ENCODE measurements at regions of chr3 and their contacts with region 1.

Region 1: DNA sequence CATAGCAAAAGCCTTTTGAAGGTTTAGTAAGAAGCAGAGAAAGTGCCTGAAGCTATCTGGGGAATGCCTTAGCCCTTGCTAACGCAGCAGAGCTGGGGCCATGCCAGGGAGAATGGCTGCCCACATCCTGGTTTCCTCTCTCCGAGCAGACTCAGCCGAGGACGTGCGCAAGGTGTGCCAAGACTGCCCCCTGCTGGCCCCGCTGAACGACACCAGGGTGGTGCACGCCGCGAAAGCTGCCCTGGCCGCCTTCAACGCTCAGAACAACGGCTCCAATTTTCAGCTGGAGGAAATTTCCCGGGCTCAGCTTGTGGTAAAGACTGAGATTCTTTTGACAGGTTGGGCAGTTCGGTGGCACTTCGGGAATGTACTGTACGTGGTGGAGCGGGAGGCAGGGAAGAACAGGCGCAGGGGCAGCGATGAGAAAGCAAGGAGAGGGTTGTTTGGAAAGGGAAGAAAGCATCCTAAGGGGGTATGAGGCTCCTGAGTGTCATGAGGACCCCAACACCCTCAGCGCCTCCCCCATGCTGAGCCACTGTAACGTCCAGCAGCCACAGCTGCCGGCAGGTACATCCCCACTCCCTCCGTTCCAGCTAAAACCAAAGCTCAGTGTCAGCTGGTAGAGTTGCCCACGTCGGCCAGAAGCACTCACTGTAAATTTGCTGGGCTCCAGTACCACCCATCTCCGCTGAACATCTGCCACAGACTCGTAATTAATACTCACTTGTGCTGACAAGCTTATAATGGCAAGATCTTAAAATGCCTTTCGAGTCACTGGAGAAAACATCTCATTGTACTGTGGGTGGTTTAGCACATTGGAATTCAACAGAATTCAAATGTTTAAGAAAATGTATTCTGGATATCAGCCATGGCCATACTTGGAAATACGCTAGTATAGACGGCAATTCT is 4.4 kb downstream of the AHSG start:
- DNase-seq: peak; percentile 93
- ATAC-seq: peak; percentile 99
- H3K4me3 Mint-ChIP-seq: peak overlapping the region; percentile 63
- H3K27ac Mint-ChIP-seq: peak overlapping the region; percentile 68
- H3K4me1 Mint-ChIP-seq: peaks cover 22% of the 10 kb centered on the region
- H3K27me3 Mint-ChIP-seq: peaks cover 32% of the 10 kb centered on the region
- CTCF ChIP-seq: peak; percentile 81

Region 2: GRCh38 chr3:185983495-185984141 is 633.7 kb before region 1 on chr3:
- CTCF ChIA-PET with region 1: interaction called, 14 read pairs
- POLR2A ChIA-PET with region 1: no interaction called
- intact Hi-C with region 1: no loop called
- DNase-seq: peak; percentile 66
- ATAC-seq: peak; percentile 77
- H3K4me3 Mint-ChIP-seq: no peak overlapping the region
- H3K27ac Mint-ChIP-seq: no peak overlapping the region
- H3K4me1 Mint-ChIP-seq: peaks cover 6% of the 10 kb centered on the region
- H3K27me3 Mint-ChIP-seq: peaks cover 6% of the 10 kb centered on the region
- CTCF ChIP-seq: peak; percentile 98

Region 3: DNA sequence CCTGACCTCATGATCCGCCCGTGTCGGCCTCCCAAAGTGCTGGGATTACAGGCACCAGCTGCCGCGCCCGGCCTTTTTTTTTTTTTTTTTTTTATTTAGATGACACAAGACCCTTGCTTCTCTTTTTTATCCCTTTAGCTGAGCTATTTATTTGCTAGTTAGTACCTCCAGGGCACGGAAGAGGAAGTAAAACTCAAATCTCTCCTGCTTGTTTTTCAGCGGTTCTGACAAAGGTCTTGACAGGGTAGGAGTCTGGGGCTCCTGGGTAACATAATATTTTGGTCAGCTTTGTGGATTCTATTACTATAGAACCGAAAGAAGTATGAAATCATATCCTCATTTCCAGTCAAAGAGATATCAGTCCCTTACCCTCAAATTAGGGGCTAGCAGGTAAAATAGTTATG is 464.4 kb before region 1 on chr3:
- CTCF ChIA-PET with region 1: no interaction called
- POLR2A ChIA-PET with region 1: no interaction called
- intact Hi-C with region 1: no loop called
- DNase-seq: no peak
- ATAC-seq: peak; percentile 53
- H3K4me3 Mint-ChIP-seq: no peak overlapping the region
- H3K27ac Mint-ChIP-seq: no peak overlapping the region
- H3K4me1 Mint-ChIP-seq: peaks cover 10% of the 10 kb centered on the region
- H3K27me3 Mint-ChIP-seq: peaks cover 33% of the 10 kb centered on the region
- CTCF ChIP-seq: no peak

Region 4: GRCh38 chr3:186298876-186299275 is 318.4 kb before region 1 on chr3:
- CTCF ChIA-PET with region 1: no interaction called
- POLR2A ChIA-PET with region 1: no interaction called
- intact Hi-C with region 1: no loop called
- DNase-seq: no peak
- ATAC-seq: no peak
- H3K4me3 Mint-ChIP-seq: no peak overlapping the region
- H3K27ac Mint-ChIP-seq: no peak overlapping the region
- H3K4me1 Mint-ChIP-seq: no peaks in the 10 kb centered on the region
- H3K27me3 Mint-ChIP-seq: peaks cover 2% of the 10 kb centered on the region
- CTCF ChIP-seq: no peak

Region 5: GRCh38 chr3:186540221-186540834 is 77.0 kb before region 1 on chr3:
- CTCF ChIA-PET with region 1: interaction called, 59 read pairs
- POLR2A ChIA-PET with region 1: no interaction called
- intact Hi-C with region 1: no loop called
- DNase-seq: peak; percentile 90
- ATAC-seq: peak; percentile 85
- H3K4me3 Mint-ChIP-seq: no peak overlapping the region
- H3K27ac Mint-ChIP-seq: no peak overlapping the region
- H3K4me1 Mint-ChIP-seq: peaks cover 58% of the 10 kb centered on the region
- H3K27me3 Mint-ChIP-seq: no peaks in the 10 kb centered on the region
- CTCF ChIP-seq: peak; percentile 79

Region 6: GRCh38 chr3:186589121-186589520 is 28.2 kb before region 1 on chr3:
- CTCF ChIA-PET with region 1: interaction called, 185 read pairs
- POLR2A ChIA-PET with region 1: interaction called, 3 read pairs
- intact Hi-C with region 1: no loop called
- DNase-seq: no peak
- ATAC-seq: no peak
- H3K4me3 Mint-ChIP-seq: no peak overlapping the region
- H3K27ac Mint-ChIP-seq: no peak overlapping the region
- H3K4me1 Mint-ChIP-seq: peaks cover 20% of the 10 kb centered on the region
- H3K27me3 Mint-ChIP-seq: no peaks in the 10 kb centered on the region
- CTCF ChIP-seq: peak; percentile 19

Region 7: DNA sequence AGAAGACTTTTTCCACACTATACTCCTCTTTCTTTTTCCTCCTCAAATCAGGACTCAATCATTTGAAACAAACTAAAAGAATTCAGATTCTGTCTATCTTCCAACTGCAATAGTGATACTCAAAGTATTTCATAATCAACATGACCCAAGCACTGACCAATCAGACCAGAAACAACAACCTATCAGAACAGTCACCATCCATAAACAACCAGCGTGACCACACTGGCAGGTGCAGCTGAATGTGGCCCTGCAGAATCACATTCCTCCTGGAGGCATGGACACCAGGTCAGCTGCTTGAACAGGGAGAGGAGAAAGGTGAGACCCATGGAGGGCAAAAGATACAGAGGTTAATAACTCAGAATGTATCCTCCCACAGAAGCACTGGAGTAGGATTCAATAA is 61.9 kb after region 1 on chr3:
- CTCF ChIA-PET with region 1: no interaction called
- POLR2A ChIA-PET with region 1: no interaction called
- intact Hi-C with region 1: no loop called
- DNase-seq: no peak
- ATAC-seq: no peak
- H3K4me3 Mint-ChIP-seq: no peak overlapping the region
- H3K27ac Mint-ChIP-seq: no peak overlapping the region
- H3K4me1 Mint-ChIP-seq: no peaks in the 10 kb centered on the region
- H3K27me3 Mint-ChIP-seq: peaks cover 33% of the 10 kb centered on the region
- CTCF ChIP-seq: no peak

Region 8: DNA sequence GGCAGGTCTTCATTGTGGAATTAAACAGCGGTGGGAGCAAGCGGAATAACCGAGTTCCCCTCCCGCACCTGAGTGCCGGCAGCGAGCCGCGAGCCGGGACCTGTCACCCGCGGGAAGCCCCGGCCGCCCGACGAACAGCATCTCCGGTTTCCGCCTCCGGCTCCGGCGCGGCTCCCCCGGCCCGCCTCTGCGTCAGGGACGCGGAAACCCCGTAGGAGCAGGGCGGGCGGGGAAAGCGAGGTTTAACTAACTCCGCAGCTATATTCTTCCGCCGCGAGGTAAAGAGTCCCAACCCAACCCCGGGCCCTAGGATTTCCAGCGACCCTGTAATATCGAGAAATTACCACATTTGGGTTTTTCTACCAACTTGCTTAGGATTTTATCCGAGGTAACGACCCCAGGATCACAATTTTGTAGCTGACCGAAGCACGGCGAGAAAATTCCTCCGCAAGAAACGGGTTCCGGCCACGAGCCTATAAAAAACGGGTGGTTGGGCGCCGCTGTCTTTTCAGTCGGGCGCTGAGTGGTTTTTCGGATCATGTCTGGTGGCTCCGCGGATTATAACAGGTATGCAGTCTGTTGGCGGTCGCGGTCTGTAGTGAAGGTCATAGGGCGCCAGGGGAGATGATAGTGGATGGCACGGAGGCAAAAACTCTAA is 165.9 kb after region 1 on chr3 and contains the start of gene EIF4A2:
- CTCF ChIA-PET with region 1: interaction called, 8 read pairs
- POLR2A ChIA-PET with region 1: interaction called, 65 read pairs
- intact Hi-C with region 1: no loop called
- DNase-seq: peak; percentile 91
- ATAC-seq: peak; percentile 78
- H3K4me3 Mint-ChIP-seq: peak within 1 kb of the TSS; percentile 97
- H3K27ac Mint-ChIP-seq: peak within 1 kb of the TSS; percentile 99
- H3K4me1 Mint-ChIP-seq: peaks cover 30% of the 10 kb centered on the region
- H3K27me3 Mint-ChIP-seq: no peaks in the 10 kb centered on the region
- CTCF ChIP-seq: no peak
- total RNA-seq, gene EIF4A2: 450 to 466 TPM

Region 9: DNA sequence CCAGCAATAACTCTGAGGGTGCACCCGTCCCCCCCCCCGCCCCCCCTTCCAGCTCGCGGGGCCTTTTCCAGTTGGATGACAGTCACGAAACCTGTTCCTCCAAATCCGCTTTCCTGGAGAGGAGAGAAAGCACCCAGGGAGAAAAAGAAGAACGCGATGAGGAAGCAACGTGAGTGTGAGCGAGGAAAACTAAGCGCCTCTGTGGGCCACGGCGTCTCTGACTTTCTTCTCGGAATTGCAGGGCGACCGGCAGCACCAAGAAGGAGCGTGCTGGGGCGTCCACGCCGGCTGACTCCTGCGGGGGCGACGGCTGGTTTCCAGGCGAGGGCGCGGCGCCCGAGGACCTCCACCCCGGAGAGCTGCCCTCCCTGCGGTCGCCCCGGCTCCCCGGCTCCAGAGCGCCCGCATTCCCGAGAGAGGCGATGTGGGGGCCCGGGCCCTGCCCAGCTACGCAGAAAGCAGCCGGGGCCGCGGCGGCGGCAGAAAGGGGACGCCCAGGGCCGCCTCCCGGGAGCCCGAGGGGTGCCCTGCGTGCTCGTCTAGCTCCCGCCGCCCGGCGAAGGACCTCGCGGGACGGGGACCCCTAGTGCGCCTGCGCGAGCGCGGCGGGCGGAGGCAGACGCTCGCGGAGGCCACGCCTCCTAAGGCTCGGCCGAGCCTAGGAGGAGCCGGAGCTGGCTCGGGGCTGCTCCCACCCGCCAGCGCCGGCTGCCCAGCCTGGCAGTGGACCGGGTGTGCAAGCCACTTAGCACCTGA is 209.9 kb after region 1 on chr3:
- CTCF ChIA-PET with region 1: interaction called, 129 read pairs
- POLR2A ChIA-PET with region 1: interaction called, 4 read pairs
- intact Hi-C with region 1: loop called (anchors 5 kb)
- DNase-seq: peak; percentile 83
- ATAC-seq: peak; percentile 86
- H3K4me3 Mint-ChIP-seq: peak overlapping the region; percentile 81
- H3K27ac Mint-ChIP-seq: peak overlapping the region; percentile 71
- H3K4me1 Mint-ChIP-seq: peaks cover 28% of the 10 kb centered on the region
- H3K27me3 Mint-ChIP-seq: peaks cover 36% of the 10 kb centered on the region
- CTCF ChIP-seq: no peak

Measured in activated CD8-positive, alpha-beta T cell treated with anti-CD3 and anti-CD28 coated beads for 36 hours (primary cell).